Right ventricle myocardium inferior (tissue), 1 donor: ENCODE measurements at regions of chr15 and their contacts with region 1.

Region 1: GRCh38 chr15:65980824-65981456 is 111.6 kb downstream of the RAB11A start:
- DNase-seq: no peak
- ATAC-seq: peak; percentile 53

Region 2: DNA sequence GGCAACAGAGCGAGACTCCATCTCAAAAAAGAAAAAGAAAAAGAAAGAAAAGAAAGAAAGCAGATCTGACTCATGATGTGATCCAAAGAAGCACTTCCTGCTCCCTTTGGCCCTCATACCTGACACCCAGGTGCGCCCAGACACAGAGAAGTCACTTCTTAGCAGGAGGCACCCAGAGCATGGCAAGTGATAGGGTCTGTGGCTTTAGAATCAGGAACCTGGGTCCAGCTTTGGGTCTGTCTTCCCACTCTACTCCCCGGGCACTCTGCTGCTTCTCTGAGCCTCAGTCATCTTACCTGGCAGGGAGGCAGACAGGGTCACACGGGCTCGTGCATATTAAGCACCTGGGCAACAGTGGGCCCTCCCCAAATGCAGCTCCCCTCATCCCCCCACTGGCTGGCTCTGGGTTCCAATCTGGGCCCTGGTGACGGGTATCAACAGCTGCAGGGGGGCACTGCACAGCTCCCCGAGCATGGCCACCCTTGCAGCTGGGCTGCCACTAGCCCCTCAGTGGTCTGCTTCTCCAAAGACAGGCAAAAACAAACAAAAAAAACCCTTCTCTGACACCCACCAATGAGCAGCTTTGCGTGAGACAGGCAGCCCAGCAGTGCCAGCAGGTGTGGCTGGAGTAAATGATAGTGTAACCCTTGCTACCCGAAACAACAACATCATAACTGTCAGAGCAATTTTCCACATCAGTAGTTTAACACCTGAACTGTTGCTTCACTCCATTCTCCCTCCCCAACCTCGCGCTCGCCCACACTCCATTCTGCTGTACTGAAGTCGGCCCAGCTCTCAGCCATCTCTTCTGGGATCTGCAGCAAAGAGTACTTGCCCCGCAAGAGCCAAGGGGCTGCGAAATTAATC is 172.8 kb after region 1 on chr15:
- intact Hi-C with region 1: loop called (anchors 2 kb)
- DNase-seq: no peak
- ATAC-seq: no peak

Region 3: DNA sequence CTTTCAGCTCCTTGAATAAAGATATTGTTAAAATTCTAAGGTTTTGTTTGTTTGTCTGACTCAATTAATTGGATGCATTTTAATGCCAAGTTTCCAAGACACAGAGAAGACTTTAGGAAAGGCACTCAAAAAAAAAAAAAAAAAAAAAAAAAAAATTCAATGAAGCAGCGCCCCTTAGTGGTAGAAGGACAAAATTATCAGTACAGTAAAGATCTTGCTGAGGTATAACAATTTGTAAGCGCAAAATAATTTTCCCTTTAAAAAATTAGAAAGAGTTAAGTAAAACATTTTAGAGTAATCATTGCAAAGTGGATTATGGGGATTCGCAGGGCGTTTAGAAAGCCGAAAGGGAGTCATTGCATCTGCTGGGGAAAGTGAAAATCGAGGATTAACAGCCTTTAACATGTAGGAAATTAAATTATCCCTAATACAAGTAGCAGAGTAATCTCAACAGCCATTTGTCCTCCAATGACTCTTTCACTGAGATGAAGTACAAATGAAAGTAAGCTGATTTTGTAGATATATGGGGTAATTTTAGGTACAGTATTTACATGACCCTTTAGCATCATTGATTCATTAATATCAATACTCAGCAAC is 306.6 kb after region 1 on chr15:
- intact Hi-C with region 1: loop called (anchors 5 kb)
- DNase-seq: no peak
- ATAC-seq: no peak